ENCODE measurements at regions of chr10 and their contacts with region 1.

Region 1: GRCh38 chr10:68560186-68560942 is at the start of gene TET1:
- DNase-seq: peak; percentile 64
- ATAC-seq: peak; percentile 88
- H3K4me3 ChIP-seq: peak within 1 kb of the TSS; percentile 91 to 99 (median 95)
- H3K27ac ChIP-seq: peak within 1 kb of the TSS; percentile 78
- H3K4me1 ChIP-seq: peaks cover 60% of the 10 kb centered on the region
- H3K27me3 ChIP-seq: no peaks in the 10 kb centered on the region
- CTCF ChIP-seq: peak; percentile 14; the same call in 1 of the 2 replicates
- EP300 ChIP-seq: no peak
- POLR2A ChIP-seq: peak; percentile 90 to 98
- RAD21 ChIP-seq: peak; percentile 42; the same call in 1 of the 2 replicates
- total RNA-seq, gene TET1: 7.3 and 10.6 TPM in 2 replicates

Region 2: DNA sequence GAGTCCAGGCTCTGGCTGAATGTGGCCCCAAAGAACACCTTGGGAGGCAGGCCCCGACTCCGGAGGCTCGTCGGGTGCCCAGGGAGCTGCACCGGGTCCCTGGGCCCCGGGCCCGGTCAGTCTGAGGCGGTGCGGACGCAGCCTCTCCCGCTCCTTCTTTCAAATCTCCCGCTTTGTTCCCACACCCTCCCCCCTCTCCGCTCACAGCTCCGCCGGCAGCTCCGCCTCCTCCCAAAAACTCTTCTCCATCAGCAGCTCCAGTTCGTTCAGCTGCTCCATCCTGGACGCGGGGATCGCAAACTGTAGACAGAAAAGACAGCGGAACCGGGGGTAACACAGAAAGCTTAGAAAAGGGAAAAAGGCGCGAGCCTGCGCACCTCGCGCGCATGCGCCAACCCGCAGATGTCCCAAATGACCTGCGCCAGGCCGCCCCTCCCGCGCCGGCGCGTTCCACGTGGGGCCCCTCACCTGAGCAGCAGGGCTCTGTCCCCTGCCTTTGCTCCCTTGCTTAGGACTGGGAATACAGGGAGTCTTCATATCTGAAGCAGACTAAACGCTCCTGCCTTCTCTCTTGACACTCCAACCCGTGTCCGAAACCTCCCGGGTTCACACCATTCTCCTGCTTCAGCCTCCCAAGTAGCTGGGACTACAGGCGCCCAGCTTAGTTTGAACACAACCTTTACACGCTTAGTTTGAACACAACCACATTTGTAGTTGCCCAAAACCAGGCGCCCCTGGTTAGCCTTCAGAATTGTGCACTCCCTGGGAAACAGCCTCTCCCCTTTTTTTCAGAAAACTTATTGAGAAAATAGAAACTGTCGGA is 88.6 kb before region 1 on chr10 and contains the start of gene DNA2:
- CTCF ChIA-PET with region 1: no interaction called
- POLR2A ChIA-PET with region 1: no interaction called
- in situ Hi-C with region 1: no loop called
- intact Hi-C with region 1: loop called (anchors 5 kb)
- DNase-seq: peak; percentile 66
- ATAC-seq: peak; percentile 92
- H3K4me3 ChIP-seq: peak within 1 kb of the TSS; percentile 80 to 84 (median 83)
- H3K27ac ChIP-seq: peak within 1 kb of the TSS; percentile 83
- H3K4me1 ChIP-seq: peaks cover 17% of the 10 kb centered on the region
- H3K27me3 ChIP-seq: no peaks in the 10 kb centered on the region
- CTCF ChIP-seq: no peak
- EP300 ChIP-seq: no peak
- POLR2A ChIP-seq: peak; percentile 37 to 65; a peak in 2 of 4 replicates
- RAD21 ChIP-seq: no peak
- total RNA-seq, gene DNA2: 27.3 and 34.6 TPM in 2 replicates

Region 3: GRCh38 chr10:68526626-68527307 is 33.6 kb before region 1 on chr10:
- CTCF ChIA-PET with region 1: no interaction called
- POLR2A ChIA-PET with region 1: no interaction called
- in situ Hi-C with region 1: no loop called
- intact Hi-C with region 1: loop called (anchors 5 kb)
- DNase-seq: peak; percentile 56
- ATAC-seq: peak; percentile 84
- H3K4me3 ChIP-seq: peak overlapping the region; percentile 80 to 88 (median 81)
- H3K27ac ChIP-seq: peak overlapping the region; percentile 93
- H3K4me1 ChIP-seq: peaks cover 18% of the 10 kb centered on the region
- H3K27me3 ChIP-seq: no peaks in the 10 kb centered on the region
- CTCF ChIP-seq: no peak
- EP300 ChIP-seq: no peak
- POLR2A ChIP-seq: no peak
- RAD21 ChIP-seq: no peak; the same call in 1 of the 2 replicates

Region 4: GRCh38 chr10:68600041-68600778 is 39.8 kb after region 1 on chr10:
- CTCF ChIA-PET with region 1: no interaction called
- POLR2A ChIA-PET with region 1: interaction called, 93 read pairs
- in situ Hi-C with region 1: loop called (anchors 5 kb)
- intact Hi-C with region 1: loop called (anchors 1 kb)
- DNase-seq: peak; percentile 95
- ATAC-seq: peak; percentile 97
- H3K4me3 ChIP-seq: peak overlapping the region; percentile 39 to 76 (median 58)
- H3K27ac ChIP-seq: peak overlapping the region; percentile 81
- H3K4me1 ChIP-seq: peaks cover 72% of the 10 kb centered on the region
- H3K27me3 ChIP-seq: no peaks in the 10 kb centered on the region
- CTCF ChIP-seq: peak; percentile 17; the same call in 1 of the 2 replicates
- EP300 ChIP-seq: peak in 1 of 2 experiments; percentile 49; a peak in 2 of 4 replicates
- POLR2A ChIP-seq: peak; percentile 41 to 50; a peak in 3 of 4 replicates
- RAD21 ChIP-seq: no peak